Calu3 (cell line): ENCODE measurements at regions of chr19 and their contacts with region 1.

Region 1: GRCh38 chr19:12666265-12667048 is at the starts of genes MAN2B1 and WDR83:
- DNase-seq: peak; percentile 74
- H3K4me3 Mint-ChIP-seq: peak within 1 kb of the TSS; percentile 88
- H3K27ac Mint-ChIP-seq: peak within 1 kb of the TSS; percentile 77
- H3K4me1 Mint-ChIP-seq: no peaks in the 10 kb centered on the region
- H3K27me3 Mint-ChIP-seq: no peaks in the 10 kb centered on the region
- CTCF ChIP-seq: no peak
- total RNA-seq, gene MAN2B1: 76.9 and 84.4 TPM in 2 replicates
- total RNA-seq, gene WDR83: 10.1 and 10.8 TPM in 2 replicates

Region 2: GRCh38 chr19:12495002-12495802 is 171.3 kb before region 1 on chr19:
- CTCF ChIA-PET with region 1: no interaction called
- intact Hi-C with region 1: loop called (anchors 5 kb)
- DNase-seq: peak; percentile 90
- H3K4me3 Mint-ChIP-seq: peak overlapping the region; percentile 71
- H3K27ac Mint-ChIP-seq: peak overlapping the region; percentile 67
- H3K4me1 Mint-ChIP-seq: no peaks in the 10 kb centered on the region
- H3K27me3 Mint-ChIP-seq: no peaks in the 10 kb centered on the region
- CTCF ChIP-seq: no peak

Region 3: GRCh38 chr19:12564016-12564664 is 102.3 kb before region 1 on chr19:
- CTCF ChIA-PET with region 1: no interaction called
- intact Hi-C with region 1: loop called (anchors 5 kb)
- DNase-seq: peak; percentile 82
- H3K4me3 Mint-ChIP-seq: no peak overlapping the region
- H3K27ac Mint-ChIP-seq: no peak overlapping the region
- H3K4me1 Mint-ChIP-seq: no peaks in the 10 kb centered on the region
- H3K27me3 Mint-ChIP-seq: no peaks in the 10 kb centered on the region
- CTCF ChIP-seq: peak; percentile 73